Activated B cell treated with CpG ODN at 0.5 μM for 24 hours (primary cell): ENCODE measurements at regions of chr16 and their contacts with region 1.

Region 1: DNA sequence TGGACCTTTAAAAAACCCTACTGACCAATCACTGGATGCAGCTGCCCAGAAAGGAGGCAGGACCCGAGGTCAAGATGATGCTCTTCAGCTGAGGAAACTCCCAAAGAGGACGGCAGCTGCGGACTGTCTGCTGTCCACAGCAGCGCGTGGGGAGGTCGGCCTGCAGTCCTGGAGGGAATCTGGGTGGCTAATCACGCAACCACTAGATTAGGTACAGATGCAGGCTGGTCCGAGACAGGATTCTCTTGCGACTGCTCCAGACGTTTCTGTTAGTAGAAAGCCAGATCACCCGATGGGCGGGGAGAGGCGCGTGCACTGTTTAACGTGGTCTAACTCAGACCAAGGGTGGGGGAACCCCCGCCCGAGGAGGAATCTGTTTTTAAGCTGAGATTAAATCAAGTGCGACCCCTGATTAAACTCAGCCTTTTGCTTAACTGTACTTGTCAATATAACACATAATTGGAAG is 8.8 kb downstream of the CTRB2 start:
- DNase-seq: no peak
- ATAC-seq: no peak
- H3K4me3 Mint-ChIP-seq: no peak overlapping the region
- H3K27ac Mint-ChIP-seq: no peak overlapping the region
- H3K4me1 Mint-ChIP-seq: peaks cover 14% of the 10 kb centered on the region
- H3K27me3 Mint-ChIP-seq: peaks cover 39% of the 10 kb centered on the region
- CTCF ChIP-seq: no peak

Region 2: GRCh38 chr16:74998481-74999218 is 199.5 kb before region 1 on chr16 and contains the start of gene ZNRF1:
- CTCF ChIA-PET with region 1: interaction called, 3 read pairs
- POLR2A ChIA-PET with region 1: no interaction called
- intact Hi-C with region 1: loop called (anchors 1 kb)
- DNase-seq: peak; percentile 58
- ATAC-seq: peak; percentile 84
- H3K4me3 Mint-ChIP-seq: peak within 1 kb of the TSS; percentile 85
- H3K27ac Mint-ChIP-seq: peak within 1 kb of the TSS; percentile 59
- H3K4me1 Mint-ChIP-seq: peaks cover 18% of the 10 kb centered on the region
- H3K27me3 Mint-ChIP-seq: peaks cover 39% of the 10 kb centered on the region
- CTCF ChIP-seq: peak; percentile 22
- total RNA-seq, gene ZNRF1: 1.6 and 2.8 TPM in 2 replicates

Region 3: GRCh38 chr16:75116081-75116910 is 81.9 kb before region 1 on chr16 and contains the start of gene LDHD:
- CTCF ChIA-PET with region 1: no interaction called
- POLR2A ChIA-PET with region 1: no interaction called
- intact Hi-C with region 1: no loop called
- DNase-seq: no peak
- ATAC-seq: no peak
- H3K4me3 Mint-ChIP-seq: no peak within 1 kb of the TSS
- H3K27ac Mint-ChIP-seq: no peak within 1 kb of the TSS
- H3K4me1 Mint-ChIP-seq: peaks cover 4% of the 10 kb centered on the region
- H3K27me3 Mint-ChIP-seq: peaks cover 19% of the 10 kb centered on the region
- CTCF ChIP-seq: no peak
- total RNA-seq, gene LDHD: not detected in 2 replicates

Region 4: DNA sequence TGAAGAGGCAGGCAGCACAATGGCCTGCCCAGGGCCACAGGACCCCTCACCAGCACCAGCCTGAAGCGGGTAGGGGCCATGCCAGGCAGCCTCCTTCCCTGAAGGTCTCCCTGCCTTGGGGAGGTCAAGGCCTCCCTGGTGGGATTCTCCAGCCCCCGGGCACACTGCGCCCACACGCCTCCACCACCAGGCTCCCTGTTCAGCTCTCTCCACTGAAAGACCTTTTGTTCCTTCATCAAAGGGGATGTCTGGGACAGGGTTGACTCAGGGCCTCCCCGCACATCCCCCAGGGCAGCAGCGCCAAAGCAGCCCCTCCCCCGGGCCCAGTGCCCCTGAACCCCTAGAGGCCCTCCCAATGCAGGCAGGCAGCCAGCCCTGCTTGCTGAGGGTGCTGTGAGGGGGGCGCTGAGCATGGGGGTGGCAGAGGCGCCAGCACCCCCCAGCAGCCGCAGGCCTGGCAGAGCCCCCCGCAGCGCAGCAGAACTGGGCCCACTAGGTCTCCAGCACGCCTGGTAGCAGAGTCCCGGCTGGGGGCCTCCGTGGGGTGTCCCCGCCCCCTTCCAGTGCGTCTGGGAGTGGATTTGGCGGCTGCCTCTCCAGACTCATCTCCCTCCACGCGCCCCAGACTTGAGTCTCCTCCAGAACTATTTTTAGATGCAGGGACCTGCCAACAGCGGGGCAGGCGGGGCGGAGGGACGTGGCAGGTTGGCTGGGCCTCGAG is 40.1 kb after region 1 on chr16:
- CTCF ChIA-PET with region 1: interaction called, 6 read pairs
- POLR2A ChIA-PET with region 1: interaction called, 10 read pairs
- intact Hi-C with region 1: loop called (anchors 5 kb)
- DNase-seq: no peak
- ATAC-seq: no peak
- H3K4me3 Mint-ChIP-seq: no peak overlapping the region
- H3K27ac Mint-ChIP-seq: no peak overlapping the region
- H3K4me1 Mint-ChIP-seq: peaks cover 2% of the 10 kb centered on the region
- H3K27me3 Mint-ChIP-seq: peaks cover 47% of the 10 kb centered on the region
- CTCF ChIP-seq: no peak

Region 5: DNA sequence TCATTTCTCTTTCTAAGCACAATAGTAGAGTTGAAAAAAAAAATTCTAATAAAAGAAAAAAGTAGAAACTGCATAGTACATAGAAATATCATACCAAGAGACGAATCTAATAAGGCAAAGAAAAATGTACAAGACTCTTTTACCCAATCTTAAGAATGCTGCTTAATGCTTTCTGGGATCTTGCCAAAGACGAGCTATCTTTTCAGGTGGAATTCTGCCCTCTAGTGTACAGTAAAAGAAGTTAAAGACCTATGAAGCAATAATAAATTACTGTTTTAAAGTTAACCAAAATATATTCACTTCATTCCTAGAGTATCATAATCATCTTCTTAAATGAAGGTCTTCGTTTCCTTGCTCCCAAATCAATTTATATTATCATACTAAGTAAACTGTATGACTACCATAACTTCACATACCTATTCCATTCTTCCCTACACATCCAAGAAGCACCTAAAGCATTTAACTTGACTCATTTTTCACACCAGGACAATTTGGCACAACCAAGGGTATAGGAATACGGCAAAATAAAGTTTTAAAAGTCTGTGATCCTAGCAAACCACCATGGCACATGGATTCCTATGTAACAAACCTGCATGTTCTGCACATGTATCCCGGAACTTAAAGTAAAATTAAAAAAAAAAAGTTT is 187.5 kb after region 1 on chr16:
- CTCF ChIA-PET with region 1: interaction called, 54 read pairs
- POLR2A ChIA-PET with region 1: interaction called, 4 read pairs
- intact Hi-C with region 1: loop called (anchors 1 kb)
- DNase-seq: no peak
- ATAC-seq: peak; percentile 37
- H3K4me3 Mint-ChIP-seq: no peak overlapping the region
- H3K27ac Mint-ChIP-seq: no peak overlapping the region
- H3K4me1 Mint-ChIP-seq: peaks cover 9% of the 10 kb centered on the region
- H3K27me3 Mint-ChIP-seq: peaks cover 31% of the 10 kb centered on the region
- CTCF ChIP-seq: peak; percentile 51

Region 6: GRCh38 chr16:75464130-75464918 is 266.2 kb after region 1 on chr16 and contains the start of gene TMEM170A:
- CTCF ChIA-PET with region 1: interaction called, 12 read pairs
- POLR2A ChIA-PET with region 1: no interaction called
- intact Hi-C with region 1: loop called (anchors 1 kb)
- DNase-seq: peak; percentile 98
- ATAC-seq: peak; percentile 95
- H3K4me3 Mint-ChIP-seq: peak within 1 kb of the TSS; percentile 92
- H3K27ac Mint-ChIP-seq: peak within 1 kb of the TSS; percentile 89
- H3K4me1 Mint-ChIP-seq: peaks cover 41% of the 10 kb centered on the region
- H3K27me3 Mint-ChIP-seq: no peaks in the 10 kb centered on the region
- CTCF ChIP-seq: peak; percentile 99
- total RNA-seq, gene TMEM170A: 25.3 and 28.3 TPM in 2 replicates

Region 7: DNA sequence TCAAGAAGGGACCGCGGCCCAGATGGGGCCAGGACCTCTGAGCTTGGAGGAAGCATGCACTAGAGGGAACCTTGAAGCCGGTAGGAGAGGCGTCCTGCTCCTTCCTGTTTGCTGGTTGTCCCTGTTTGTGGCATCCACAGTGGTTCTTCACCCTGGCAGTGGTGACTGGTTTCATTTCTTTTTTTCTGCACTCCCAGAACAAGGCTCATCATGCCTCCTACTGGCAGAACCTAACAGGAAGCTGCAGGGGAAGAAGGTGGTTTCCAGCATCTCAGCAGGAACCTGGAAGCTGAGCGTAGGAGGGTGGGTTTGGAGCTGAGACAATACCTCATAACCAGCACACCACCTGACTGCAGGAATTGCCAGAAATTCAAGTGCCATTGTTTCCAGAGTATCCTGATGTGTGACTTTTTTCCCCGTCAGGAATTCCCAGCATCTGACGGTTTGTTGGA is 352.1 kb after region 1 on chr16:
- CTCF ChIA-PET with region 1: no interaction called
- POLR2A ChIA-PET with region 1: no interaction called
- intact Hi-C with region 1: loop called (anchors 1 kb)
- DNase-seq: no peak
- ATAC-seq: peak; percentile 84
- H3K4me3 Mint-ChIP-seq: no peak overlapping the region
- H3K27ac Mint-ChIP-seq: no peak overlapping the region
- H3K4me1 Mint-ChIP-seq: peaks cover 13% of the 10 kb centered on the region
- H3K27me3 Mint-ChIP-seq: no peaks in the 10 kb centered on the region
- CTCF ChIP-seq: no peak